ENCODE measurements at regions of chr1 and their contacts with region 1.

Region 1: GRCh38 chr1:236759252-236759859 is 35.7 kb upstream of the MTR start:
- DNase-seq: peak in 1 of 7 donors; percentile 8
- H3K4me3 ChIP-seq: no peak overlapping the region
- H3K27ac ChIP-seq: no peak overlapping the region
- H3K4me1 ChIP-seq: no peaks in the 10 kb centered on the region
- H3K27me3 ChIP-seq: no peaks in the 10 kb centered on the region
- CTCF ChIP-seq: peak; percentile 45 to 79 (median 64)
- POLR2A ChIP-seq: no peak

Region 2: DNA sequence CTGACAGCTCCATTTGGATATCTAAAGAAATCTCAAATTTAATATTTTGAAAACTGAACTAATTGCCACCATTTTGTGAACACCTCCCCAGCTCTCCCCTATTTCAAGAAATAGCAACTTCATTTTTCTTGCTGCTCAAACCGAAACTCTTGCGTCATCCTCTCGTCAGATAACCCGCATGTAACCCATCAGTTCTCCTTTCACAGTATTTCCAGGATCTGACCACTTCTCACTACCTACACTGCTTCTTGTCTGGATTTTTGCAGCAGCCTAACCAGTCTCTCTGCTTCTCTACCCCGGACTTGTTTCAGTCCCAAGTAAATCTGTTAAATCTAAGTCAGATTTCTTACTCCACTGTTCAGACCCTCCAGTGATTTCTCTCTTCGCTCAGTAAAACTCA is 111.4 kb after region 1 on chr1:
- intact Hi-C with region 1: loop called in 1 of 2 experiments (anchors 10 kb)
- DNase-seq: peak in 2 of 7 donors; percentile 21 to 32
- H3K4me3 ChIP-seq: no peak overlapping the region
- H3K27ac ChIP-seq: no peak overlapping the region
- H3K4me1 ChIP-seq: no peaks in the 10 kb centered on the region
- H3K27me3 ChIP-seq: no peaks in the 10 kb centered on the region
- CTCF ChIP-seq: no peak
- POLR2A ChIP-seq: no peak

Region 3: GRCh38 chr1:237386362-237387143 is 627.2 kb after region 1 on chr1:
- intact Hi-C with region 1: loop called in 1 of 2 experiments (anchors 5 kb)
- DNase-seq: no peak
- H3K4me3 ChIP-seq: no peak overlapping the region
- H3K27ac ChIP-seq: no peak overlapping the region
- H3K4me1 ChIP-seq: no peaks in the 10 kb centered on the region
- H3K27me3 ChIP-seq: no peaks in the 10 kb centered on the region
- CTCF ChIP-seq: peak; percentile 29 to 66 (median 48)
- POLR2A ChIP-seq: no peak

Measured in adrenal gland (tissue), 19 donors.